T-cell (primary cell): ENCODE measurements at regions of chr14 and their contacts with region 1.

Region 1: GRCh38 chr14:55245657-55246268 is 25.5 kb upstream of the FBXO34 start:
- DNase-seq: peak in 23 of 35 experiments; percentile 3 to 65 (median 22)
- ATAC-seq: peak in 3 of 4 experiments; percentile 56 to 67 (median 66)
- H3K4me3 ChIP-seq: no peak overlapping the region
- H3K4me3 Mint-ChIP-seq: no peak overlapping the region
- H3K27ac ChIP-seq: no peak overlapping the region
- H3K27ac Mint-ChIP-seq: no peak overlapping the region
- H3K4me1 ChIP-seq: no peaks in the 10 kb centered on the region
- H3K4me1 Mint-ChIP-seq: no peaks in the 10 kb centered on the region
- H3K27me3 ChIP-seq: peaks cover 0 to 3% of the 10 kb centered on the region in 2 experiments
- H3K27me3 Mint-ChIP-seq: peaks cover 15 to 17% of the 10 kb centered on the region in 2 donors

Region 2: GRCh38 chr14:53696217-53696965 is 1549.4 kb before region 1 on chr14:
- CTCF ChIA-PET with region 1: no interaction called
- POLR2A ChIA-PET with region 1: no interaction called
- DNase-seq: no peak
- ATAC-seq: no peak
- H3K4me3 ChIP-seq: no peak overlapping the region
- H3K4me3 Mint-ChIP-seq: no peak overlapping the region
- H3K27ac ChIP-seq: no peak overlapping the region
- H3K27ac Mint-ChIP-seq: no peak overlapping the region
- H3K4me1 ChIP-seq: no peaks in the 10 kb centered on the region
- H3K4me1 Mint-ChIP-seq: no peaks in the 10 kb centered on the region
- H3K27me3 ChIP-seq: no peaks in the 10 kb centered on the region
- H3K27me3 Mint-ChIP-seq: no peaks in the 10 kb centered on the region

Region 3: DNA sequence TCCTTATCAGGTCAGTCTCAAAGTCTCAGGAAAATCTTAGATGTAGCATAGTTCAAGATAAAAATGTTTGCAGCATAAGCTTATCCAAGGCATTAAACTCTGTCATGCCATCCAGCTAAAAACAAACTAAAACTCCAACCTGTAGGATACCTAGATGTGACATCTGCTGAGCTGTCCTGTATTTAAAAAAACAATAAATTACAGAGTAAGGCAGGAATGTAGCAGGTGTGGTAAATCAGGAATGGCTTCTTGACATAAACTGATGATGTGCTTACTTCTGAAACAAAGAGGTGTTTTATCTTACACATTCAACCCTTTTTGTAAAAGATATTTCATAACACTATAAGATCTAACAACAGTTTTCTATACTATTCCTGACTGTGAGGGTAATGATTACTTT is 23.8 kb before region 1 on chr14:
- CTCF ChIA-PET with region 1: no interaction called
- POLR2A ChIA-PET with region 1: no interaction called
- DNase-seq: no peak
- ATAC-seq: no peak
- H3K4me3 ChIP-seq: no peak overlapping the region
- H3K4me3 Mint-ChIP-seq: no peak overlapping the region
- H3K27ac ChIP-seq: no peak overlapping the region
- H3K27ac Mint-ChIP-seq: no peak overlapping the region
- H3K4me1 ChIP-seq: no peaks in the 10 kb centered on the region
- H3K4me1 Mint-ChIP-seq: no peaks in the 10 kb centered on the region
- H3K27me3 ChIP-seq: peaks cover 0 to 3% of the 10 kb centered on the region in 2 experiments
- H3K27me3 Mint-ChIP-seq: peaks cover 2 to 3% of the 10 kb centered on the region in 2 donors

Region 4: DNA sequence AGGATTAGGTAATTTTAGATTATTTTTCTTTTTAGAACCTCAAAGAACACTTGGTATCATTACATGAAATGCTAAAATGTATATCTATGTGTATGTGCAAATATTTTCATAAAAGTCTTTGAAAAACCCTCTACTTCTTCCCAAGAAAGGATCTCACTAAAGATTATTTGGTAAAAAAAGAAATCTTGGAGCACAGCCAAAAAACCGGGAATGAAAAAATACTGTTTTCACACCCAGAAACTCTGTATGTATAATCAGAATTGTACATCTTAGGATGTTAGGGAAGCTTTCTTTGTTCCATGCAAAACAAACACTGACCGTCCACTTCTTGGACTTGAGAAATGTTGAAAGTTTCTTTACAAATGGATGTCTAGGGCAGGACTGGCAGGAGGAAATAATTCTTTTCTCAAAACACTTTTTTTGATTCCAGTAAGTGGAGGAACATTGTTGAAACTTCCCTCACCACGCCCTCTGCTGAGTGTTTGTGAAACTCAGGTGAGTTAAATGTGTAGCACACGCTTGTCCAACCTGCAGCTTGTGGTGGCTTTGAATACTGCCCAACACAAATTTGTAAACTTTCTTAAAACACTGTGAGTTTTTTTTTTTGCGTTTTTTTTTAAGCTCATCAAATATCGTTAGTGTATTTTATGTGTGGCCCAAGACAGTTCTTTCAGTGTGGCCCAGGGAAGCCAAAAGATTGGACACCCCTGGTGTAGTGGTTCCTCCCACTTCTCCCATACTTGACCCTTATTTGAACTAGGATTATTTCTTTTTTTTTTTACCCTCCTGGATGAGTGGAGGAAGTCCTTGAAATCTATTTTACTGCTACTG is 52.1 kb after region 1 on chr14:
- CTCF ChIA-PET with region 1: no interaction called
- POLR2A ChIA-PET with region 1: interaction called in 1 of 2 experiments, 17 read pairs
- DNase-seq: peak in 17 of 35 experiments; percentile 5 to 48 (median 14)
- ATAC-seq: peak in 1 of 4 experiments; percentile 48
- H3K4me3 ChIP-seq: no peak overlapping the region
- H3K4me3 Mint-ChIP-seq: no peak overlapping the region
- H3K27ac ChIP-seq: no peak overlapping the region
- H3K27ac Mint-ChIP-seq: peak overlapping the region in 1 of 2 donors; percentile 55
- H3K4me1 ChIP-seq: peaks cover 9 to 12% of the 10 kb centered on the region in 2 experiments
- H3K4me1 Mint-ChIP-seq: peaks cover 61 to 77% (median 72%) of the 10 kb centered on the region in 3 donors
- H3K27me3 ChIP-seq: no peaks in the 10 kb centered on the region
- H3K27me3 Mint-ChIP-seq: no peaks in the 10 kb centered on the region

Region 5: DNA sequence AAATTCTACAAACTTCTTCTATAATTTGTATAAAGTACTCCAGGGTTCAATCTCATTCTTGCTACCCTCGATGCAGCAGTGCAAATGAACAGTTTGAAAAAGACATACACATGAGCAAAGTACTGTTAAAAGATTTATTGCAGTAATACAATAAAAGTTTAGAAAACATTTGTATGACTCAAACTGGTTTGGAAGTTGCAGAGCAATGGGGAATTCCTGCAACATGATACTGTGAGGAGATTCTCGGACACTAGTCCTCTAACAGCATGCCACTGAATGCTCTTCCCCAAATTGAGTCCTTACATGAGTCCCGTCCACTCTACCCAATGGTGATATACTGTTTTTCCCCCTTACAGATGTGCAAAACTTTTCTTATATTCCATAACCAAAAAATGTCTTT is 120.5 kb after region 1 on chr14:
- CTCF ChIA-PET with region 1: no interaction called
- POLR2A ChIA-PET with region 1: no interaction called
- DNase-seq: no peak
- ATAC-seq: no peak
- H3K4me3 ChIP-seq: no peak overlapping the region
- H3K4me3 Mint-ChIP-seq: no peak overlapping the region
- H3K27ac ChIP-seq: no peak overlapping the region
- H3K27ac Mint-ChIP-seq: peak overlapping the region; percentile 11 to 23
- H3K4me1 ChIP-seq: peaks cover 0 to 3% of the 10 kb centered on the region in 2 experiments
- H3K4me1 Mint-ChIP-seq: peaks cover 4 to 14% (median 10%) of the 10 kb centered on the region in 3 donors
- H3K27me3 ChIP-seq: no peaks in the 10 kb centered on the region
- H3K27me3 Mint-ChIP-seq: no peaks in the 10 kb centered on the region